MCF 10A (cell line): ENCODE measurements at regions of chr15 and their contacts with region 1.

Region 1: GRCh38 chr15:41989259-41989933 is 17.0 kb upstream of the EHD4 start:
- DNase-seq: peak; percentile 83
- H3K4me3 Mint-ChIP-seq: no peak overlapping the region
- H3K27ac Mint-ChIP-seq: no peak overlapping the region
- H3K4me1 Mint-ChIP-seq: no peaks in the 10 kb centered on the region
- H3K27me3 Mint-ChIP-seq: no peaks in the 10 kb centered on the region
- CTCF ChIP-seq: peak; percentile 98

Region 2: DNA sequence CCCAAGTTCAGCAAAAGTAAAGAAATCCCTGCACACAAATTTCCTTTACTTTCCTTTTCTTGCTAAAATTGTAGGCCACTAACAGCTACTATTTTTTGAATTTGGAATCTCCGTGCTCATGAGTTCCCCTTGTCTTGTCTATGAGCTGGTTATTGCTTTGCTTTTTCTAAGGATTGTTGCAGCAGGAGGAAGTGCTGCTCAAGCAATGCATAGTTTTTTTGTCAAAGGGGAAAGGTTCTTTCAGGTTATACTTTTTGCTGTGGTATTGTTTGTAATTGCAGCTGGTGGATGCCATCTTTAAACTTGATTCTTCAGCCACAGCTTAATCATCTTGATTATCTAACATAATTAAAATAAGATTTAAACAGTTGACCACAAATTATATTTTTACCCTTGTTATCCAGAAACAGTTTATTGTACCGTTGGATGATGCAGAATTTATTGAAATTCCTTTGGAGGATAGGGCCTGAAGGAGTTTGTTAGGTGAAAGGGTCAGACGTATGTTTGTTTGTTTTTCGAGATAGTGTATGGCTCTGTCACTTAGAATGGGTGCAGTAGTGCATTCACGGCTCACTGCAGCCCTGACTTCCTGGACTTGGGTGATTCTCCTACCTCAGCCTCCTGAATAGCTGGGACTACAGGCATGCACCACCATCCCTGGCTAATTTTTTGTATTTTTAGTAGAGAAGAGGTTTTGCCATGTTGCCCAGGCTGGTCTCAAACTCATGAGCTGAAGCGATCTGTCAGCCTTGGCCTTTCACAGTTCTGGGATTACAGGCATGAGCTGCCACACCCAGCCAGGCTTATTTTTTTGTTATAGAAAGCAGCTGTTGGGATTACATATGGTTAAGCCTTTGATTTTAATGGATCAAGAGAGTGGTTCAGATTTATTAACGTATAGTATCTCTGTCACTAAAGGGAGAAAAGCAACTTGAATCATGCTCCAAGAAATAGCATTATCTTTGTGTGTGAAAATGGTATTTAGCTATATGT is 317.4 kb before region 1 on chr15:
- CTCF ChIA-PET with region 1: no interaction called
- POLR2A ChIA-PET with region 1: no interaction called
- intact Hi-C with region 1: no loop called
- DNase-seq: no peak
- H3K4me3 Mint-ChIP-seq: no peak overlapping the region
- H3K27ac Mint-ChIP-seq: no peak overlapping the region
- H3K4me1 Mint-ChIP-seq: no peaks in the 10 kb centered on the region
- H3K27me3 Mint-ChIP-seq: no peaks in the 10 kb centered on the region
- CTCF ChIP-seq: no peak

Region 3: DNA sequence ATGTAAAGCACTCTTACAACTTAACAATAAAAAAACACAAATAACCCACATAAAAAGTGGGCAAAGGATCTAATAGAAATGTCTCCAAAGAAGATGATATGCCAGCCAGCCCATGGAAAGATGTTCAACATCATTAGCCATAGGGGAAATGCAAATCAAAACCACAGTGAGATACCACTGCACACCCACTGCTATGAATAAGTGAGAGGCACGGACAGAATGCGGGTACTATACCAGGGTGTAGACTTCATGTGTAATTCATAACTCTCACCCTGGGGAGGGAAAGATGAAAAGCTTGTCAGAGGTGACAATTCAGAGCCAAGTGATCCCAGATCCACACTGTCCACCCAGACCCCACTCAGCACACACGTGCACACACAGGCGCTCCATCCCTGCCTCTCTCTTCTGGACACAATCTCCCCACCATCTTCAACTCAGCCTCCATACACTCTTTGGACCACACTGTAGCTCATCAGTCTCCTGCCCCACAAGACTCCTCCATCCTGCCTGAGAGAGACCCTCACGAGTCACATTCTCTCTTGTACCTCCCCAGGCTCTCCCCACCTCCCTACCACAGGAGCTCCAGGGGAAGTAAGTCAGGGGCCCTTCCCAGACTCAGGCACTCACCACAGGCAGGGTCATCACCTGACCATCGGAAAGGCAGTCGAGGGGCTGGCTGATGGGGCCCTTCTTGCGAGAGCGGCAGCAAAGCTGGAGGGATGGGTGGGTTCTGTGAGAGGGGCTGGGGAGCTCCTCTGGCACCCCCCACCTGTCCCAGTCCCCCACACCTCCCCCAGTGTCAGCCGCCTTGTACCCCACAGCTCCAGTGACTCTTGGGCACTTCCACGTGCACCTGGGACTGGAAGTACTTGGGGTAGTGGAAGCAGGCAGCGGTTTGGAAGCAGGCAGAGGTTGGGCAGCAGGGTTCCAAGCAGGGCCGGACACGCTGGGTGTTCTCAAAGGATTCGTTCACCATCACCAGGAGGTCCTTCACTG is 10.2 kb after region 1 on chr15:
- CTCF ChIA-PET with region 1: interaction called, 30 read pairs
- POLR2A ChIA-PET with region 1: interaction called, 4 read pairs
- intact Hi-C with region 1: no loop called
- DNase-seq: no peak
- H3K4me3 Mint-ChIP-seq: no peak overlapping the region
- H3K27ac Mint-ChIP-seq: no peak overlapping the region
- H3K4me1 Mint-ChIP-seq: no peaks in the 10 kb centered on the region
- H3K27me3 Mint-ChIP-seq: peaks cover 11% of the 10 kb centered on the region
- CTCF ChIP-seq: no peak

Region 4: DNA sequence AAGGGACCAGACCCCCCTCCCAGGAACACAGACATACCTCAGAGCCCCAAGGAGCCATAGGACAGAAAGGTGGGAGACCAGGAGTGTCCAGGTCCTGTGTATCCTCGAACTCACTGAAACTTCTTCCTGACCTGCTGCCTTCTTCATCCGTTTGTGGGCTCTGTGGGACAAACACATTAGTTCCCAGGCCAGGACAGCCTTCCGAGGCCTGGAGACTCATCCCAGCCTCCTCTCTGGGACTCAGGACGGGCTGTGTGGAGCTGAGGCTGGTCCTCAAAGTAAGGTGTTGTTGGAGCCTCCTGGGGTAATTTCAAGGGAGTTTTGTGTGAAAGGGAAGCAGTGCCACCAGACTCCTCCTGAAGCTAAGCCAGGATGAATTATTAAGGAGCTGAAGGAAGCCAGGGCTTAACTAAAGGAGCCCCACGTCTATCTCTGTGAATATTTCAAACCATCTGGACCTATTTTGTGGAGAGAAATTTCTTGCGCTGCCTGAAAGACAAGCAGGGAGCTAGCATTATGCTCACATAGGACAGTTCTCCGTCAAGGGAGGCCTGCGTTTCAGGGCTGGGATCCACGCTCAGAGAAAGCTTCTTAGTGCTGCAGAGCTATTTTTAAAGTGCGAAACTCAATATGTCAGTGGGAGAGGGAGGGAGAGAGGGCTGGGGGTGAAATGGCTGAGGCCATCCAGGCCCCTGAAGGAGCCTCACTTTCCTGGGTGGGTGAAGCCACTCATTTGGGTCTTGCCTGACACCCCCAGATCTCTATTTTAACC is 61.3 kb after region 1 on chr15:
- CTCF ChIA-PET with region 1: interaction called, 56 read pairs
- POLR2A ChIA-PET with region 1: interaction called, 28 read pairs
- intact Hi-C with region 1: no loop called
- DNase-seq: no peak
- H3K4me3 Mint-ChIP-seq: no peak overlapping the region
- H3K27ac Mint-ChIP-seq: no peak overlapping the region
- H3K4me1 Mint-ChIP-seq: no peaks in the 10 kb centered on the region
- H3K27me3 Mint-ChIP-seq: no peaks in the 10 kb centered on the region
- CTCF ChIP-seq: no peak

Region 5: GRCh38 chr15:42413920-42414319 is 424.5 kb after region 1 on chr15:
- CTCF ChIA-PET with region 1: no interaction called
- POLR2A ChIA-PET with region 1: no interaction called
- intact Hi-C with region 1: no loop called
- DNase-seq: no peak
- H3K4me3 Mint-ChIP-seq: no peak overlapping the region
- H3K27ac Mint-ChIP-seq: no peak overlapping the region
- H3K4me1 Mint-ChIP-seq: no peaks in the 10 kb centered on the region
- H3K27me3 Mint-ChIP-seq: no peaks in the 10 kb centered on the region
- CTCF ChIP-seq: no peak